ENCODE measurements at regions of chr12 and their contacts with region 1.

Region 1: DNA sequence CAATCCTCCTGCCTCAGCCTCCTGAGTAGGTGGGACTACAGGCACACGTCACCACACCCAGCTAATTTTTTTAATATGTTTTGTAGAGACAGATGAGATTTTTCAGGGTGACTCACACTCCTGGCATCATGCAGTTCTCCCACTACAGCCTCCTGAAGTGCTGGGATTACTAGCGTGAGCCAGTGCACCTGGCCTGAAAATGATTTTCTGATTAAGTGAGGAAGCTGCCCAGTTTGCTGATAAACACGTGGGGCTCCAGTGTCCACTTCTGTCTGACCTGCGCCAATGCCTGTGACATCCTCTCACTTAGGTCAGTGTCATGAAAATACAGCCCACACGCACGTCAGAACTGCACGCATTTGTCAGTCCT is 37.0 kb upstream of the SFSWAP start:
- DNase-seq: no peak
- H3K4me3 ChIP-seq: no peak overlapping the region
- H3K27ac ChIP-seq: no peak overlapping the region
- H3K4me1 ChIP-seq: no peaks in the 10 kb centered on the region
- H3K27me3 ChIP-seq: peaks cover 0 to 46% (median 1%) of the 10 kb centered on the region in 3 donors
- CTCF ChIP-seq: no peak
- EP300 ChIP-seq: no peak
- POLR2A ChIP-seq: no peak

Region 2: GRCh38 chr12:131290255-131290959 is 383.5 kb before region 1 on chr12:
- intact Hi-C with region 1: loop called (anchors 10 kb)
- DNase-seq: no peak
- H3K4me3 ChIP-seq: no peak overlapping the region
- H3K27ac ChIP-seq: no peak overlapping the region
- H3K4me1 ChIP-seq: no peaks in the 10 kb centered on the region
- H3K27me3 ChIP-seq: peaks cover 0 to 14% (median 0%) of the 10 kb centered on the region in 3 donors
- CTCF ChIP-seq: no peak
- EP300 ChIP-seq: no peak
- POLR2A ChIP-seq: no peak

Region 3: DNA sequence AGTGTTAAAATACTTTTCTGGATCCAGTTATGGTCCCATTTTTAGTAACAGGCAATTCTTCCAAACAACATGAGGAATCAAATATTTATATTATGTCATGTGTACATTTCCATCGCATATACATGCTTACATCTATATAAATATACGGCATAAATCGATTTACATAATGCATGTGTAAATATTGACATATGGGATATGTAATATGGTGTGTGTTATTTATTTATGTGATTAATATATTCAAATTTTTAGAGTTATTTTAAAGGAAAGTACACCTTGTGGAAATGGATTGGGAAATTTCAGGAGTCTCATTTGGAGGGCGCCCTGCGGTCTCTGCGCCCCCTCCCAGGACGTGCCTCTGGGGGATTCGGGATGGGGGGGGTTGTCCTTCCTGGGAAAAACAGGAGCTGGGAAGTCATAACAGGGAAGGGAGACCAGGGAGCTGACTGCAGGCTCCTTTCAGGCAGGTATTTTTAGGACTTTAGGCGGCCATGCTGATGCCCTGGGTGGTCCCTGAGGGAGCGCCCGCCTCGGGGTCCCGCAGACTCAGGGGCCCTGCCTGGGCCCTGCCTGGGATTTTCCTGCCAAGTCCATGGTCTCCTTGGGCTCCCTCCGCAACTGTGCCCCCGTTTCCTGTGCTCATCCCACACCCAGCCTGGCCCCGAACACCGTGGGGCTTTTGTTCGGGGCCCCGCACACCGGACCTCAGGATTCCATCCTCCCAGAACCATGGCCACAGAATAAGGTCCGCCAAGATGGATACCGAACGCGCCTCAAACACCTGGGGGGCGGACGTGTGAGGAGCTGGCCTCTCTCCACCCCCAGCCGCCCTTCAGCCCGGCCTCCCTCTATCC is 45.6 kb before region 1 on chr12:
- intact Hi-C with region 1: no loop called
- DNase-seq: no peak
- H3K4me3 ChIP-seq: no peak overlapping the region
- H3K27ac ChIP-seq: no peak overlapping the region
- H3K4me1 ChIP-seq: peaks cover 0 to 14% (median 7%) of the 10 kb centered on the region in 4 donors
- H3K27me3 ChIP-seq: peaks cover 4 to 62% (median 15%) of the 10 kb centered on the region in 3 donors
- CTCF ChIP-seq: no peak
- EP300 ChIP-seq: no peak
- POLR2A ChIP-seq: no peak

Region 4: DNA sequence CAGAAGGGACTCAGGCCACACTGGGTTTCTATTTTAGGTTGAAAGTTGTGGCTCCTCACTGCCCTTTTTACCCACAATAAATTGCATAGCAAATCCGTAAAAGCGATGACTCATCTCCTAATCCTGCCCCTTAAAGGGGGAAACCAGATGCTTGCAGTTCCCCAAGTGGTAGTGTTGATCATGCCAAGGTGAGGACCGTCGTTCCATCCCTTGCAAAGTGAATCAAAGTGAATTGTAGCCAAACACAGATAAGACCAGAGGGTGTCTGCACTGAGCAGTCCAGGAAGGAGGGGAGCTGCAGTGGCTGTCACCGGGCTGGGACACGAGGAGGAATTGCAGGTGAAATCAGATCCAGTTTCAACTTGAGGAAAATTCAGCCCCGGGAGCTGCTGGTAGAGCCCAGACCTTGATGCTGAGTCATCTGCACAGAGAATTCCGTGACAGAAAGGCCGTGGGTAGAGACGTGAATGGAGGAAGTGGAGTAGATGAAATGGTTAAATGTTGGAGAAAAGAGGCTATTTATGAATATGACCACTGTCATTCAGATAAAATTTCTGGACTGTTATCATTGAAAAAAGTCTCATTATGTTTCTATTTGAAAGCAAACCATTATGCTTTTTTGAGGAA is 110.2 kb after region 1 on chr12:
- intact Hi-C with region 1: no loop called
- DNase-seq: no peak
- H3K4me3 ChIP-seq: no peak overlapping the region
- H3K27ac ChIP-seq: no peak overlapping the region
- H3K4me1 ChIP-seq: peaks cover 0 to 7% (median 0%) of the 10 kb centered on the region in 4 donors
- H3K27me3 ChIP-seq: no peaks in the 10 kb centered on the region
- CTCF ChIP-seq: no peak
- EP300 ChIP-seq: no peak
- POLR2A ChIP-seq: no peak